PC-9 (cell line): ENCODE measurements at regions of chr1 and their contacts with region 1.

Region 1: DNA sequence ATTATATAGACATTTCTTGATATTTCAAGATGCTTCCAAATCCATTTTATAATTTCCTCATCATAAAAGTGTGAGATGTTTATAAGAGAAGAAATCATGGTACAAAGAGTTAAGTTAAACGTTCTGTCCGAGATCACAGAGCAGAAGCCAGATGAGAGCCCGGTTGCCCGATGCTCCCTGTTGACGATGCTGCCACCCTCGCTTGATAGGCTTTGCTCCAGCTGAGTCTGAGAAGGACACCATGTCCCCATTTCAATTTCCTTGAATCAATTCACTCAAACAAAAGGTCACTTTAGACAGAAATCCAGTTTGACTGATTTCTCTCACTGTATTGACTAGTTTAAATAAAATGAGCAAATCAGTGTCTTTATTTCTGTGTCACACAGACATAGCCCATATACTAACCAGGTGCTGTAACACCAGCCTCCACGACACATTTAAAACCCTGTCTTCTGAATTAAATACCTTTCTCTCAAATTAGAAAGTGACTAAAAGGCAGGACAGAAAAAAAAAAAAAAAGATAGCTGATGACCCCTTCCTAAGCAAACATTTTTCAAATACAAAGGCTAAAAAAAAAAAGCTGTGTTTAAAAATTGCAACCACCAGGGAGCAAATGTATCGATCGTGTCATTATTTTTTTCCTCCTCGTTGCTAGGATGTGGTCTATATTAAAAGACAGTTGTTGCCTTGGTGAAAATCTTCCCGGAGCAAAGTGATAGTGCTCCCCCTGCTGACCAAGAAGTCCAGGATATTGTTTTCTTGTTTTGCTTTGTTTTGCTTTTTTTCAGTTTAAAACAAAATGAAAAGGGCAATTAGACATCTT is 35.2 kb downstream of the DNASE2B start:
- DNase-seq: peak; percentile 43 to 79
- H3K4me3 ChIP-seq: peak overlapping the region; percentile 14; the same call in 1 of the 2 replicates
- H3K27ac ChIP-seq: no peak overlapping the region
- H3K4me1 ChIP-seq: peaks cover 17% of the 10 kb centered on the region
- H3K27me3 ChIP-seq: no peaks in the 10 kb centered on the region
- CTCF ChIP-seq: peak; percentile 93

Region 2: GRCh38 chr1:84298328-84298683 is 135.2 kb before region 1 on chr1:
- CTCF ChIA-PET with region 1: no interaction called
- POLR2A ChIA-PET with region 1: no interaction called
- intact Hi-C with region 1: loop called (anchors 2 kb)
- DNase-seq: peak in 1 of 2 experiments; percentile 33
- H3K4me3 ChIP-seq: peak overlapping the region; percentile 99
- H3K27ac ChIP-seq: no peak overlapping the region
- H3K4me1 ChIP-seq: peaks cover 24% of the 10 kb centered on the region
- H3K27me3 ChIP-seq: no peaks in the 10 kb centered on the region
- CTCF ChIP-seq: no peak

Region 3: GRCh38 chr1:84603941-84604830 is 170.7 kb after region 1 on chr1:
- CTCF ChIA-PET with region 1: no interaction called
- POLR2A ChIA-PET with region 1: no interaction called
- intact Hi-C with region 1: loop called (anchors 2 kb)
- DNase-seq: peak; percentile 74 to 97
- H3K4me3 ChIP-seq: peak overlapping the region; percentile 52
- H3K27ac ChIP-seq: peak overlapping the region; percentile 60
- H3K4me1 ChIP-seq: peaks cover 36% of the 10 kb centered on the region
- H3K27me3 ChIP-seq: no peaks in the 10 kb centered on the region
- CTCF ChIP-seq: peak; percentile 92

Region 4: GRCh38 chr1:84936116-84936810 is 502.8 kb after region 1 on chr1:
- CTCF ChIA-PET with region 1: no interaction called
- POLR2A ChIA-PET with region 1: no interaction called
- intact Hi-C with region 1: loop called (anchors 5 kb)
- DNase-seq: peak; percentile 20 to 56
- H3K4me3 ChIP-seq: no peak overlapping the region
- H3K27ac ChIP-seq: no peak overlapping the region
- H3K4me1 ChIP-seq: no peaks in the 10 kb centered on the region
- H3K27me3 ChIP-seq: no peaks in the 10 kb centered on the region
- CTCF ChIP-seq: peak; percentile 98